Heart left ventricle (tissue), 16 donors: ENCODE measurements at regions of chr18 and their contacts with region 1.

Region 1: DNA sequence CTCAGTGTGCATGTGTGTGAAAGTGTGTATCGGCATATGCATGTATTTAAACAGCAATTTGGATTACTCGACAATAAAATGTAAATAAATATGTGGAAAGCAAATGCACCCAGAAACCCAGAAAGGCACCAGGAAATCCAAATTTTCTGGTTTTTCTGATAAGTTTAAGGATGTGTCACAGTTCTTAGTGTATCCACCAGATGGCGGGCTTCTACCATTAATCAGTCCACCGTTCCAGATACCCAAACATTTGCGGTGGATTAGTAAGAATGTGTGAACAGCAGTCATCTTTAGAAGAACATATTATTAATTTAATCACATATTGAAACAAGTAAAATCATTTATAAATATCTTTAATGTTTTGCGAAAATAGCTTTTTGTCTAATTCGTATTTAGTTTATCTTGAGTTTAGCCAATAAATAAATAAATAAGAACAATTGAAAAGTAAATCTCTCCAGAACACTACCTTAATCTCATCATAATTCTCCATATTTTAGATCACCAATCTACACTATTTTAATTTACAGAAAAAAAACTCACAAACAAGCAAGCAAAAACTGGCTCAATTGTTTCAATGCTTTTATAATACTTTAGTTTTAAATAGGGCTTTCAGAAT is 298.9 kb downstream of the DSEL start:
- DNase-seq: peak in 3 of 5 donors; percentile 20 to 29 (median 23)
- ATAC-seq: peak in 3 of 4 donors; percentile 49 to 73 (median 67)
- H3K4me3 ChIP-seq: no peak overlapping the region
- H3K27ac ChIP-seq: no peak overlapping the region
- H3K4me1 ChIP-seq: no peaks in the 10 kb centered on the region
- H3K27me3 ChIP-seq: no peaks in the 10 kb centered on the region
- CTCF ChIP-seq: peak; percentile 68 to 87 (median 80)
- POLR2A ChIP-seq: no peak

Region 2: DNA sequence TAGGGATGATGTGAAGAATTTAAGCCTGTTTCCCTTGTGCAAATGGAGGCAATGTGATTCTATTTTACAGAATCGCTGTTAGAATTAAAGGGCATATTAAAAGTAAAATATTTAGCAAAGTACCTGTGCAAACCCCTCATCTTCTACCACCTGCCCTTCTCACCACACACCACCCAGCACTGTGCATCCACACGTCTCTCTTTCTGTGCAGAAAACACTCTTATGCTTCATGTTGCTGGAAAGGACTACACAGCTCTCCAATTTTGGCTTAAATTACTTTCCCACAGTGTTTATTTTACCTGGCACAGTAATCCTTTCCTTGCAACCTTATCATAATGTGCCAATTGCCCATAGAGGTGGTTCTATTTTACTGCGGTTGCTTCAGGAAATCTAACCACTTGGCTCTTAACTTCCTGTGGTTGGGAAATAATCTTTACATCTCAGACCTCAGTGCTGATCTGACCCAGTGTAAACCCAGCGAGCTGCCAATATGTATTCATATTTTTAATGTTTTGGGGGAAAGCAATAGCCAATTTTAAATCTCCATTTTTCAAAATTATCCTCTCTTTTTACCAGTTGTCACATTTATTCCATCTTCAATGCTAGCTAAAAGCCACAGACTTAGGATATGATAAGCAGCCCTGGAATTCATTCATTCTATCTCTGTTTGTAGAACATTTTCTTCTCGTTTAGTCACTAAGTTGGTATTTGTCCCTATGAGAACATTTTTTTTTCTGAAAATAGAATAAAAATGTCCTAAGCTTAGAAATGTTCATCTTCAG is 48.0 kb after region 1 on chr18:
- intact Hi-C with region 1: no loop called
- DNase-seq: no peak
- ATAC-seq: peak in 3 of 4 donors; percentile 24 to 62 (median 58)
- H3K4me3 ChIP-seq: no peak overlapping the region
- H3K27ac ChIP-seq: peak overlapping the region in 1 of 12 donors; percentile 37
- H3K4me1 ChIP-seq: peaks cover 0 to 19% (median 0%) of the 10 kb centered on the region in 12 donors
- H3K27me3 ChIP-seq: no peaks in the 10 kb centered on the region
- CTCF ChIP-seq: no peak
- POLR2A ChIP-seq: no peak

Region 3: GRCh38 chr18:67805261-67805660 is 587.6 kb after region 1 on chr18:
- intact Hi-C with region 1: no loop called
- DNase-seq: no peak
- ATAC-seq: no peak
- H3K4me3 ChIP-seq: no peak overlapping the region
- H3K27ac ChIP-seq: no peak overlapping the region
- H3K4me1 ChIP-seq: no peaks in the 10 kb centered on the region
- H3K27me3 ChIP-seq: no peaks in the 10 kb centered on the region
- CTCF ChIP-seq: no peak
- POLR2A ChIP-seq: no peak

Region 4: DNA sequence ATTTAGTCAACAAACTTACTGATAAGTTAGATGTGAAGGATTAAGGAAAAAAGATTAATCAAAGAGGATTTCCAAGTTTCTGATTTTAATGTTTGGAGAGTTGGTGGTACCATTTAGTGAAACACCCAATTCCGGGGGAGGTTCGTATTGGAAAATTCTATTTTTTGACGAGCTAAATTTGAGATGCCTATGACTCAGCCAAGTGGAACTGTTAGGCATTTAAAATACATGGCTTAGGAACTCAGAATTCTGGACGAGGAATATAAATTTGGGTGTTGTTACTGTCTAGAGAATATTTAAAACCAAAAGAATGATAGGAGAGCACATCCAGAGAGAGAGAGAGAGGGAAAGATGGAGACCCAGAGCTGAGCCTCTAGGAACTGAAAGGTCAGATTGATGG is 1393.7 kb after region 1 on chr18:
- intact Hi-C with region 1: loop called in 1 of 10 experiments (anchors 10 kb)
- DNase-seq: no peak
- ATAC-seq: no peak
- H3K4me3 ChIP-seq: no peak overlapping the region
- H3K27ac ChIP-seq: no peak overlapping the region
- H3K4me1 ChIP-seq: no peaks in the 10 kb centered on the region
- H3K27me3 ChIP-seq: no peaks in the 10 kb centered on the region
- CTCF ChIP-seq: no peak
- POLR2A ChIP-seq: no peak

Region 5: GRCh38 chr18:68660354-68661183 is 1442.9 kb after region 1 on chr18:
- intact Hi-C with region 1: loop called (anchors 1 to 5 kb)
- DNase-seq: no peak
- ATAC-seq: no peak
- H3K4me3 ChIP-seq: no peak overlapping the region
- H3K27ac ChIP-seq: no peak overlapping the region
- H3K4me1 ChIP-seq: no peaks in the 10 kb centered on the region
- H3K27me3 ChIP-seq: peaks cover 0 to 3% (median 0%) of the 10 kb centered on the region in 9 donors
- CTCF ChIP-seq: peak; percentile 36 to 69 (median 56)
- POLR2A ChIP-seq: no peak

Region 6: GRCh38 chr18:68735483-68736343 is 1518.1 kb after region 1 on chr18:
- intact Hi-C with region 1: loop called in 2 of 10 experiments (anchors 5 to 10 kb)
- DNase-seq: no peak
- ATAC-seq: peak in 2 of 4 donors; percentile 53 to 60
- H3K4me3 ChIP-seq: no peak overlapping the region
- H3K27ac ChIP-seq: no peak overlapping the region
- H3K4me1 ChIP-seq: peaks cover 0 to 6% (median 0%) of the 10 kb centered on the region in 12 donors
- H3K27me3 ChIP-seq: no peaks in the 10 kb centered on the region
- CTCF ChIP-seq: peak; percentile 31 to 73 (median 66)
- POLR2A ChIP-seq: no peak